ENCODE measurements at regions of chr12 and their contacts with region 1.

Region 1: GRCh38 chr12:107131832-107132616 is 38.7 kb upstream of the CRY1 start:
- DNase-seq: peak; percentile 21
- H3K4me3 Mint-ChIP-seq: no peak overlapping the region
- H3K27ac Mint-ChIP-seq: no peak overlapping the region
- H3K4me1 Mint-ChIP-seq: peaks cover 2% of the 10 kb centered on the region
- H3K27me3 Mint-ChIP-seq: peaks cover 2% of the 10 kb centered on the region

Region 2: DNA sequence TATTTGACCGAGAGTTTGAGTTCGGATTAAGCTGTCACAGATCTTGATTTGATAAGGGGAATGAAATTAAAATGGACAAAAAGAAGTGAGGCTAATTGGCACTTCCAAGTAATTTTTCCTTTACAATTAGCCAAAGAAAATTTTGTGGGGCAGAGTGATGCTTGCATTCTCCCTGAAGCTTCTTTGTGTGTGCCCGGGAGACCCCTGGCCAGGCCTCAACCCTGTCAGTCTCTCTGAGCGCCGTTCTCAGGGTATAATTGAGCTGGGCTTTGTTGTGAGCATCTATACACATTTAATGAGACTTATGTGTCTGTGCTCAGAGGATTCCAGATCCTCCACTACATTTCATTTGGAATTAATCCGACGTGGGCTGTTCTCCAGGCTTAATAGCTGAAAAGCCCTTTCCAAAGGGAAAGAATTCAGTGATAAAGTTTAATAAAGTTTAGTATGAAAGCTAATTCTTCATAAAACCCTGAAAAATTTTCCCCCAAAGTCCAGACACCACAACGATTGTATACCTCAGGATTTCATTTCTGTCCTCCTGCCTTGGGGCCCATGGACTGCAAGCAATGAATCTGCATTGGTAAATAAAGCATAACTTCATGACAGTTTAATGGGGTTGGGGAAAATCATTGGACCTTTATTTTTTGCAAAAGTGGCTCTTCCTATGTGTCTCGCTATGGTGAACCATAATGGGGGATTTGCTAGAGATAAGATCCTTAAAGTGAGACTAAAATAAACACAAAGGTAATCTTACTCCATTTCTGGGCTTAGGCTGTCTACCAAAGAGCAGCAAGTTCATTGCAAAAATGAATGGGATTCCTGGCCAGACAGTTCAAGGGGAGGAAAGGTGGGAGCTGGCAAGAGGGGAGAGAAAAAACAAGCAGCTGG is 1508.9 kb before region 1 on chr12:
- CTCF ChIA-PET with region 1: no interaction called
- POLR2A ChIA-PET with region 1: no interaction called
- DNase-seq: no peak
- H3K4me3 Mint-ChIP-seq: no peak overlapping the region
- H3K27ac Mint-ChIP-seq: no peak overlapping the region
- H3K4me1 Mint-ChIP-seq: no peaks in the 10 kb centered on the region
- H3K27me3 Mint-ChIP-seq: no peaks in the 10 kb centered on the region

Region 3: DNA sequence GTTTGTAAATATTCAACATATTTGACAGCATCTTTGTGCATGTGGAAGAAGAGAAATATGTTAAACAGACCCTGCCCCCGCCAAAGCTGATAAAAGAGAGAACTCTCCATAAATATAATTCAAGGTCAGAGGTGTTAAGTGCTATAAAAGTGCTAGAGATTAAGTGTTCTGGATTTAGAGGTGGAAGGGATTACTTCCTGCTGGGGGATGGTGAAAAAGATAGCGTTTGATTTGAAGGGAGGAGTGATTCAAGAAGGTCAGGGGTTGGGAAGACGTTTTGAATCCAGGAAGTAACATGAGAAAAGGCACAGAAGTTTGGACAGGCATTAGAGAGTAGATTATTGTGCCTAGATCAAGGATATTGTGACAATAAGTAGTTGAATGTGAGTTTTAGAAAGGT is 327.4 kb before region 1 on chr12:
- CTCF ChIA-PET with region 1: no interaction called
- POLR2A ChIA-PET with region 1: no interaction called
- DNase-seq: no peak
- H3K4me3 Mint-ChIP-seq: no peak overlapping the region
- H3K27ac Mint-ChIP-seq: no peak overlapping the region
- H3K4me1 Mint-ChIP-seq: no peaks in the 10 kb centered on the region
- H3K27me3 Mint-ChIP-seq: no peaks in the 10 kb centered on the region

Region 4: GRCh38 chr12:107184359-107184980 is 52.4 kb after region 1 on chr12:
- CTCF ChIA-PET with region 1: no interaction called
- POLR2A ChIA-PET with region 1: no interaction called
- DNase-seq: no peak
- H3K4me3 Mint-ChIP-seq: no peak overlapping the region
- H3K27ac Mint-ChIP-seq: no peak overlapping the region
- H3K4me1 Mint-ChIP-seq: peaks cover 2% of the 10 kb centered on the region
- H3K27me3 Mint-ChIP-seq: peaks cover 20% of the 10 kb centered on the region

Region 5: GRCh38 chr12:107402041-107403022 is 270.3 kb after region 1 on chr12:
- CTCF ChIA-PET with region 1: interaction called, 10 read pairs
- POLR2A ChIA-PET with region 1: no interaction called
- DNase-seq: peak; percentile 76
- H3K4me3 Mint-ChIP-seq: no peak overlapping the region
- H3K27ac Mint-ChIP-seq: no peak overlapping the region
- H3K4me1 Mint-ChIP-seq: peaks cover 40% of the 10 kb centered on the region
- H3K27me3 Mint-ChIP-seq: no peaks in the 10 kb centered on the region

Region 6: GRCh38 chr12:107607464-107608392 is 475.7 kb after region 1 on chr12:
- CTCF ChIA-PET with region 1: interaction called, 12 read pairs
- POLR2A ChIA-PET with region 1: interaction called, 3 read pairs
- DNase-seq: peak; percentile 83
- H3K4me3 Mint-ChIP-seq: no peak overlapping the region
- H3K27ac Mint-ChIP-seq: no peak overlapping the region
- H3K4me1 Mint-ChIP-seq: peaks cover 1% of the 10 kb centered on the region
- H3K27me3 Mint-ChIP-seq: no peaks in the 10 kb centered on the region

Measured in activated CD4-positive, alpha-beta T cell treated with anti-CD3 and anti-CD28 coated beads, Interleukin-2, amount 10 ng/mL, durations not matched to agents 7 days and 5 days (primary cell).